PC-9 (cell line): ENCODE measurements at regions of chr14 and their contacts with region 1.

Region 1: DNA sequence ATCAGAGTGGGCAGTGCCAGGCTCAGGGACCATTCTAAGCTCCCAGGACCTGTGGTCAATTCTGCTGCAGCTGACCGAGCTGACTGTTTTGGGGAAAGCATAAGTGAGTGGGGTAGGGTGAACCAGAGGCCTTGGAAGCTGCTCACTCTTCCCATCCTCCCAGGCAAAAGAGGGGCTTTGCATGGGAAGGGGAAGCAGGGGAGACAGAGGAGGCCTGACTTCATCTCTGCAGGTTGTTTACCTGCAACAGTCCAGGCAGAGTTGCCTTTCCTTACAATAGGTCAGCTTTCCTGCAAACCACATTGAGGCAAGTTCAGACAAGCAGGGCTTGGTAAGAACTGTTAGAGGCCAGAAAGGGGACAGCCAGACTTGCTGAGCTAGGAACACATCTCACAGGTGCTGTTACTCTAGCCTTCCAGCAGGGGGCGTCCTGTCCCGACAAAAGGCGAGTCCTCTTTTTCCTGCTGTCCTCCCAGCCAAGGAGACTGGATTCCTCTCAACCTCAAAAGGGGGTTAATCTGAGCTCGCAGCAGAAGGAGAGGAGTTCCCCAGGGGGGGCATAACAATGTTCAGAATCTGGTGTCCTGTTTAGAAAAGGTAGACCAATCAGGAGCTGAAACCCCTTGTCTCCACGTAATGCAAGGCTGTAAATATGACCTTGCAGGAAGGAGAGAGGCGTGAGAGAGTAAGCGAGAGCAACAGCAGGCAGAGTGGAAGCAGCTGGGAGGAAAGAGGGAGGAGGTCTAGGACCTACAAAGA is 4.3 kb upstream of the DHRS2 start:
- DNase-seq: peak; percentile 37 to 70
- H3K4me3 ChIP-seq: no peak overlapping the region
- H3K27ac ChIP-seq: no peak overlapping the region
- H3K4me1 ChIP-seq: peaks cover 8% of the 10 kb centered on the region
- H3K27me3 ChIP-seq: no peaks in the 10 kb centered on the region
- CTCF ChIP-seq: peak; percentile 89

Region 2: GRCh38 chr14:23657951-23658470 is 26.1 kb after region 1 on chr14:
- CTCF ChIA-PET with region 1: no interaction called
- POLR2A ChIA-PET with region 1: no interaction called
- intact Hi-C with region 1: no loop called
- DNase-seq: no peak
- H3K4me3 ChIP-seq: no peak overlapping the region
- H3K27ac ChIP-seq: no peak overlapping the region
- H3K4me1 ChIP-seq: no peaks in the 10 kb centered on the region
- H3K27me3 ChIP-seq: no peaks in the 10 kb centered on the region
- CTCF ChIP-seq: no peak

Region 3: GRCh38 chr14:23694085-23694975 is 62.4 kb after region 1 on chr14:
- CTCF ChIA-PET with region 1: no interaction called
- POLR2A ChIA-PET with region 1: no interaction called
- intact Hi-C with region 1: loop called (anchors 2 kb)
- DNase-seq: peak; percentile 75 to 96
- H3K4me3 ChIP-seq: peak overlapping the region; percentile 31; the same call in 1 of the 2 replicates
- H3K27ac ChIP-seq: peak overlapping the region; percentile 98
- H3K4me1 ChIP-seq: peaks cover 53% of the 10 kb centered on the region
- H3K27me3 ChIP-seq: no peaks in the 10 kb centered on the region
- CTCF ChIP-seq: no peak

Region 4: GRCh38 chr14:23910101-23910875 is 278.4 kb after region 1 on chr14:
- CTCF ChIA-PET with region 1: interaction called, 13 read pairs
- POLR2A ChIA-PET with region 1: no interaction called
- intact Hi-C with region 1: loop called (anchors 1 kb)
- DNase-seq: peak in 1 of 2 experiments; percentile 56
- H3K4me3 ChIP-seq: no peak overlapping the region
- H3K27ac ChIP-seq: no peak overlapping the region
- H3K4me1 ChIP-seq: no peaks in the 10 kb centered on the region
- H3K27me3 ChIP-seq: no peaks in the 10 kb centered on the region
- CTCF ChIP-seq: peak; percentile 78

Region 5: DNA sequence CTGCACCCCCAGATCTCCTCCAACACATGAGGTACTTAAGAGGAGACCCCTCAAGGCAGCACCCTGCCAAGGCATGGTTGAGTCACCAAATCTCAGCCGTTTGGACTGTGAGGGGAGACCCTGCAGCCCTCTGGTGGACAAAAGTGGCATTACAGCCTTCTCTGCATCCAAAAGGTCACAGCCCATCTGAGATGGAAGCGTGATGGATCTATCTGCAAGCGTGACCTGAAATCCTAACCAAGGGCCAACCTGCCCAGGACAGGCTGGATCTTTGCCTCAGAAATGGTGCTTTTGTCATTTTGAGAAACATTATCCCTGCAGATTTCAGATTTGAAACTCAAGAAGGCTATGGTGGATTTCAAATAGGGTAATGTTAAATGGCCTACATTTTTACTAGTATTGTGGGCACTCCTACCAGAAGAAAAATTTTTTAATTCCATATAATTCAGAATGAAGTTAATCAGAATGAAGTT is 298.0 kb after region 1 on chr14:
- CTCF ChIA-PET with region 1: no interaction called
- POLR2A ChIA-PET with region 1: no interaction called
- intact Hi-C with region 1: loop called (anchors 1 kb)
- DNase-seq: peak in 1 of 2 experiments; percentile 47
- H3K4me3 ChIP-seq: no peak overlapping the region
- H3K27ac ChIP-seq: no peak overlapping the region
- H3K4me1 ChIP-seq: no peaks in the 10 kb centered on the region
- H3K27me3 ChIP-seq: no peaks in the 10 kb centered on the region
- CTCF ChIP-seq: peak; percentile 89

Region 6: GRCh38 chr14:23953464-23954278 is 321.8 kb after region 1 on chr14 and contains the start of gene DHRS4:
- CTCF ChIA-PET with region 1: no interaction called
- POLR2A ChIA-PET with region 1: no interaction called
- intact Hi-C with region 1: loop called (anchors 1 kb)
- DNase-seq: peak; percentile 64 to 78
- H3K4me3 ChIP-seq: peak within 1 kb of the TSS; percentile 78
- H3K27ac ChIP-seq: peak within 1 kb of the TSS; percentile 70
- H3K4me1 ChIP-seq: no peaks in the 10 kb centered on the region; the same call in 1 of the 2 replicates
- H3K27me3 ChIP-seq: no peaks in the 10 kb centered on the region
- CTCF ChIP-seq: peak; percentile 90
- total RNA-seq, gene DHRS4: 17.6 and 24.1 TPM in 2 replicates